Esophagus muscularis mucosa (tissue), 4 donors: ENCODE measurements at regions of chr11 and their contacts with region 1.

Region 1: GRCh38 chr11:124409906-124410305 is 11.1 kb upstream of the OR8B3 start:
- DNase-seq: peak; percentile 17
- H3K4me3 ChIP-seq: no peak overlapping the region
- H3K27ac ChIP-seq: no peak overlapping the region
- H3K4me1 ChIP-seq: no peaks in the 10 kb centered on the region
- H3K27me3 ChIP-seq: peaks cover 0 to 10% (median 3%) of the 10 kb centered on the region in 4 donors
- CTCF ChIP-seq: no peak
- EP300 ChIP-seq: no peak
- POLR2A ChIP-seq: no peak

Region 2: GRCh38 chr11:124075841-124076651 is 333.9 kb before region 1 on chr11:
- intact Hi-C with region 1: no loop called
- DNase-seq: no peak
- H3K4me3 ChIP-seq: peak overlapping the region; percentile 37 to 56 (median 40)
- H3K27ac ChIP-seq: no peak overlapping the region
- H3K4me1 ChIP-seq: peaks cover 7 to 13% (median 12%) of the 10 kb centered on the region in 4 donors
- H3K27me3 ChIP-seq: peaks cover 0 to 56% (median 7%) of the 10 kb centered on the region in 4 donors
- CTCF ChIP-seq: no peak
- EP300 ChIP-seq: no peak
- POLR2A ChIP-seq: no peak

Region 3: DNA sequence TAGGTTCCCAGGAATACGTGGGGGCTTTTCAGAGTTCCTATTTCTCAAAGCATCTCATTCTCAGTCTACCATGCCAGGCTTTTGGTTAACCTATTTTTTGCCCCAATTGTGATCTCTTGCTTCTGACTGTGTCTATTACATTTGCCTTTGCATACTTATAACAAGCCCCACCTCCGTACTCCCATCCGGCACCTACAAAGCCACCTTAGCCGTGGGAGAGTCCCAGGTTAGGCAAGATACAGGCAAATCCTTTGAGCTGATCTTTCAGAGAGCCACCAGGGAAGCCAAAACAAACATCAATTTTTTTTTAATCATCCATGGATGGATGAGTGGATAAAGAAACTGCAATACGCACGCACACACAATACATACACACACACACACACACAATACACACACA is 182.7 kb after region 1 on chr11:
- intact Hi-C with region 1: loop called (anchors 5 kb)
- DNase-seq: no peak
- H3K4me3 ChIP-seq: no peak overlapping the region
- H3K27ac ChIP-seq: no peak overlapping the region
- H3K4me1 ChIP-seq: no peaks in the 10 kb centered on the region
- H3K27me3 ChIP-seq: peaks cover 0 to 14% (median 0%) of the 10 kb centered on the region in 4 donors
- CTCF ChIP-seq: no peak
- EP300 ChIP-seq: no peak
- POLR2A ChIP-seq: no peak